ENCODE measurements at regions of chr9 and their contacts with region 1.

Region 1: GRCh38 chr9:95875305-95876137 is at the start of gene ERCC6L2:
- DNase-seq: peak; percentile 90

Region 2: DNA sequence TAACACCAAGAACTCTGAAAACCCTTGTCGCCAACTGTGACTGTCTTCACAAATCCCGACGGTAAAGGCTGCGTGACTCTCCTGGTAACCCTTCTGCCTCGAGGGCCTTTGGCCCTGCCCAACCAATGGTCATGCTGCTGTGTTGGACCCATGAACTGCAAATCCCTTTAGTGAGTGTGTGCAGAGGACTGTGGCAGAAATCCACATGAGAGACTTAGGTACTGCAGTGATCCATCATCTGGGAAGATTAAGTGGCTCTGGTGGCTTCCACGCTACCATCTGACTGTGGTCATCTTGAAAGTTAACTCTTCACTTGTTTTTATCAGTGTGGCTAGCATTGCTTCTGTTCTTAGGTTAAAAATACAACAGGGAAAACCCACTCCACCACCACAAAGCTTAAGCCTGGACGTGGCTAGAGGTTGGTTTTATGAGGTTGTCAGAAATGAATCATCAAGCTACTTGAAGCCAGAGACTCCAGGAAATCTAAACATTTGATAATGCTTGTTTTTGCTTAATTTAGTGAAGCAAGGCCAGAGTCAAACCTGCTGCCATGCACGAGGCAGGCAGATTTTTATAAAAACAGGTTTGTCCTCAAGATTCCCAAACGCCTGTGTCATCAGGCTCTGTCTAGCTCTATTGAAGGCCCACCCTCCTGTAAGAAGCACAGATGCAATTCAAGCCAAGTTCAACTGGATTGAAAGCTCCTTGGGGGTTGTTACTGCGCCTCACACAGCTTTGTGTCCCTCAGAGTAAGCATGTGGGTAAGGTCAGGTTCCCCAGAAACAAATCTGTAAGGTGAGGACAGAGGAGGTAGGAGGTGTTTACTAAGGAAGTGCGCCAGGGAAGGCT is 52.7 kb before region 1 on chr9:
- CTCF ChIA-PET with region 1: no interaction called
- POLR2A ChIA-PET with region 1: interaction called, 10 read pairs
- DNase-seq: no peak

Region 3: GRCh38 chr9:95840074-95840473 is 35.4 kb before region 1 on chr9:
- CTCF ChIA-PET with region 1: no interaction called
- POLR2A ChIA-PET with region 1: no interaction called
- DNase-seq: no peak

Region 4: DNA sequence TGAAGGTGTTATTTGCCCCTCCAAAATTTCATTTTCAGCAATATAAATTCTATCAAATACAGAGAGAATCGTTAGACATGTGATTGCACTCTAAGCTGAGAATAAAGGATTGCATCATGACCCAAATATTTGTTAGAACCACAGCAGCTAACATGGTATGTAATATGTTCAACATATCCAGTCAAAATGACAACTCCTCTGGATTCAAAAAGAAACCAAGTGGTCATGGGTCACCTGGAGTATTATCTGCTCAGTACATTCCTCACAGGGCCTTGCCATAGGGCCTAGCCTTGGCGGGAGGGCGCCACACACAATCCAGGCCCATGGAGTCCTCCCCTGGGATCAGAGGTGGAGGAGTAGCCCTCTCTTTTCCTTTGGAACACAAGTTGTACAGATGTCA is 247.2 kb after region 1 on chr9:
- CTCF ChIA-PET with region 1: no interaction called
- POLR2A ChIA-PET with region 1: no interaction called
- DNase-seq: no peak